ENCODE measurements at regions of chr2 and their contacts with region 1.

Region 1: GRCh38 chr2:104872866-104873688 is 19.2 kb downstream of the POU3F3 start:
- DNase-seq: peak; percentile 72 to 88
- H3K4me3 ChIP-seq: peak overlapping the region; percentile 35
- H3K4me1 ChIP-seq: peaks cover 8% of the 10 kb centered on the region
- H3K27me3 ChIP-seq: no peaks in the 10 kb centered on the region

Region 2: DNA sequence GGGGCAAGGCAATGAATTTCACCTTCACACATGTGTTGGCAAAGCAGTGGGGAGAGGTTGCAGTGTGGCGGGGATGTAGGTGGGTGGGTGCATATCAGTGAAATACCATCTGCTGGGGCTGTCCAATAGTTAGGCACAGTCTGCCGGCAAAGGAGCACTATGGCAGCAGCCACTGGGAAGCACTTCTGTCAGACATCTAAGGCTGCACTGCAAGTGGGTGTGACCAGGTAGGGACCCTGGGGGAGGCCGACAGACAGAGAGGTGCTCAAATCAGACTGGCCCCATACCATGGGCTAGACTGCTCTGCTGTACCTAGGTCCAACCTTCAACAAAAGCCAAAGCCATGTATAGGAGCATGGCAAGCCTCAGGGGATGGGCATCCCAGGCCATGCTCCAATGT is 1139.6 kb before region 1 on chr2:
- in situ Hi-C with region 1: no loop called
- DNase-seq: no peak
- H3K4me3 ChIP-seq: no peak overlapping the region
- H3K4me1 ChIP-seq: no peaks in the 10 kb centered on the region
- H3K27me3 ChIP-seq: no peaks in the 10 kb centered on the region

Region 3: GRCh38 chr2:105337124-105338019 is 464.3 kb after region 1 on chr2 and contains the start of gene C2orf49:
- in situ Hi-C with region 1: loop called (anchors 25 kb)
- DNase-seq: peak; percentile 71 to 91
- H3K4me3 ChIP-seq: peak within 1 kb of the TSS; percentile 91
- H3K4me1 ChIP-seq: peaks cover 14% of the 10 kb centered on the region
- H3K27me3 ChIP-seq: no peaks in the 10 kb centered on the region

Measured in HAP-1 (cell line).